GM12878 (cell line): ENCODE measurements at regions of chr22 and their contacts with region 1.

Region 1: GRCh38 chr22:46563381-46564083 is 26.1 kb upstream of the CELSR1 start:
- DNase-seq: no peak
- ATAC-seq: peak; percentile 97
- H3K4me3 ChIP-seq: no peak overlapping the region; the same call in 1 of the 2 replicates
- H3K27ac ChIP-seq: peak overlapping the region; percentile 50; the same call in 1 of the 2 replicates
- H3K4me1 ChIP-seq: peaks cover 12% of the 10 kb centered on the region
- H3K27me3 ChIP-seq: no peaks in the 10 kb centered on the region
- CTCF ChIP-seq: peak; percentile 80 to 93 (median 84)
- EP300 ChIP-seq: no peak
- POLR2A ChIP-seq: no peak
- RAD21 ChIP-seq: peak; percentile 81

Region 2: GRCh38 chr22:46491923-46492322 is 71.6 kb before region 1 on chr22:
- CTCF ChIA-PET with region 1: no interaction called
- POLR2A ChIA-PET with region 1: no interaction called
- RAD21 ChIA-PET with region 1: no interaction called
- SMC1A ChIA-PET with region 1: no interaction called
- in situ Hi-C with region 1: no loop called
- intact Hi-C with region 1: no loop called
- DNase-seq: no peak
- ATAC-seq: no peak
- H3K4me3 ChIP-seq: no peak overlapping the region
- H3K27ac ChIP-seq: no peak overlapping the region
- H3K4me1 ChIP-seq: peaks cover 3% of the 10 kb centered on the region; the same call in 1 of the 2 replicates
- H3K27me3 ChIP-seq: no peaks in the 10 kb centered on the region; a peak in 1 of 4 replicates
- CTCF ChIP-seq: no peak
- EP300 ChIP-seq: no peak
- POLR2A ChIP-seq: no peak
- RAD21 ChIP-seq: no peak

Region 3: GRCh38 chr22:46551321-46551720 is 12.2 kb before region 1 on chr22:
- CTCF ChIA-PET with region 1: interaction called, 13 read pairs
- POLR2A ChIA-PET with region 1: no interaction called
- RAD21 ChIA-PET with region 1: interaction called, 4 read pairs
- SMC1A ChIA-PET with region 1: no interaction called
- in situ Hi-C with region 1: no loop called
- intact Hi-C with region 1: no loop called
- DNase-seq: no peak
- ATAC-seq: no peak
- H3K4me3 ChIP-seq: no peak overlapping the region
- H3K27ac ChIP-seq: no peak overlapping the region
- H3K4me1 ChIP-seq: no peaks in the 10 kb centered on the region
- H3K27me3 ChIP-seq: no peaks in the 10 kb centered on the region; a peak in 2 of 4 replicates
- CTCF ChIP-seq: no peak
- EP300 ChIP-seq: no peak
- POLR2A ChIP-seq: no peak
- RAD21 ChIP-seq: no peak

Region 4: GRCh38 chr22:46592390-46592872 is 28.9 kb after region 1 on chr22:
- CTCF ChIA-PET with region 1: interaction called, 19 read pairs
- POLR2A ChIA-PET with region 1: no interaction called
- RAD21 ChIA-PET with region 1: interaction called, 13 read pairs
- SMC1A ChIA-PET with region 1: interaction called, 13 read pairs
- in situ Hi-C with region 1: no loop called
- intact Hi-C with region 1: no loop called
- DNase-seq: no peak
- ATAC-seq: peak; percentile 71
- H3K4me3 ChIP-seq: peak overlapping the region; percentile 29; the same call in 1 of the 2 replicates
- H3K27ac ChIP-seq: peak overlapping the region; percentile 94
- H3K4me1 ChIP-seq: peaks cover 46% of the 10 kb centered on the region
- H3K27me3 ChIP-seq: no peaks in the 10 kb centered on the region
- CTCF ChIP-seq: no peak
- EP300 ChIP-seq: peak; percentile 15 to 66; a peak in 1 of 4 replicates
- POLR2A ChIP-seq: no peak
- RAD21 ChIP-seq: no peak

Region 5: DNA sequence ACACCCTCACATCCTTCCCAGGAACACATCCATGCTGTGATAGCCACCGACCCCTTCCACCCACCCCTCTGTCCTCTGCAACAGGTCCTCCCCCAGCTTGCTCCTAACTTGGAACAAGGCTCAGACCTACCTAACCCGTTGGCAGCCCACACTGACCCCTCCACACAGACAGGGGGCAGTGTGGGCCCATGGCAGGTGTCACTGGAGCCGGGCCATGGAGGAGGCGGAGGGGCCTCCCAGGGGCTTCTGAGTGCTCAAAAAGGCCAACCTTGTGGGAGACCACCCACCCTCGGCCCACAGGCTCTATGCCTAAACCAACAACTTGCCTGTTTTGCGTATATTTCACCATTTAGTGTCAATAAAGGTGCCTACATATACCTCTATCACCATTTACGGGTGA is 117.5 kb after region 1 on chr22:
- CTCF ChIA-PET with region 1: interaction called, 37 read pairs
- POLR2A ChIA-PET with region 1: no interaction called
- RAD21 ChIA-PET with region 1: interaction called, 8 read pairs
- SMC1A ChIA-PET with region 1: interaction called, 13 read pairs
- in situ Hi-C with region 1: no loop called
- intact Hi-C with region 1: loop called (anchors 1 kb)
- DNase-seq: no peak
- ATAC-seq: peak; percentile 74
- H3K4me3 ChIP-seq: no peak overlapping the region
- H3K27ac ChIP-seq: no peak overlapping the region
- H3K4me1 ChIP-seq: peaks cover 24% of the 10 kb centered on the region
- H3K27me3 ChIP-seq: no peaks in the 10 kb centered on the region
- CTCF ChIP-seq: peak; percentile 45 to 71 (median 50)
- EP300 ChIP-seq: no peak
- POLR2A ChIP-seq: no peak
- RAD21 ChIP-seq: peak; percentile 54

Region 6: GRCh38 chr22:46737976-46738646 is 174.6 kb after region 1 on chr22 and contains the start of gene CERK:
- CTCF ChIA-PET with region 1: interaction called, 8 read pairs
- POLR2A ChIA-PET with region 1: interaction called, 3 read pairs
- RAD21 ChIA-PET with region 1: interaction called, 13 read pairs
- SMC1A ChIA-PET with region 1: interaction called, 6 read pairs
- in situ Hi-C with region 1: no loop called
- intact Hi-C with region 1: loop called (anchors 5 kb)
- DNase-seq: no peak
- ATAC-seq: peak; percentile 61
- H3K4me3 ChIP-seq: peak within 1 kb of the TSS; percentile 96
- H3K27ac ChIP-seq: peak within 1 kb of the TSS; percentile 63
- H3K4me1 ChIP-seq: peaks cover 30% of the 10 kb centered on the region
- H3K27me3 ChIP-seq: no peaks in the 10 kb centered on the region
- CTCF ChIP-seq: no peak
- EP300 ChIP-seq: no peak
- POLR2A ChIP-seq: peak; percentile 56; the same call in 1 of the 2 replicates
- RAD21 ChIP-seq: no peak
- polyA plus RNA-seq, gene CERK: 4.0 to 5.8 TPM

Region 7: GRCh38 chr22:46774253-46774979 is 210.9 kb after region 1 on chr22:
- CTCF ChIA-PET with region 1: interaction called, 12 read pairs
- POLR2A ChIA-PET with region 1: interaction called, 5 read pairs
- RAD21 ChIA-PET with region 1: interaction called, 4 read pairs
- SMC1A ChIA-PET with region 1: interaction called, 6 read pairs
- in situ Hi-C with region 1: no loop called
- intact Hi-C with region 1: no loop called
- DNase-seq: no peak
- ATAC-seq: peak; percentile 62
- H3K4me3 ChIP-seq: peak overlapping the region; percentile 73
- H3K27ac ChIP-seq: peak overlapping the region; percentile 94
- H3K4me1 ChIP-seq: peaks cover 63% of the 10 kb centered on the region
- H3K27me3 ChIP-seq: no peaks in the 10 kb centered on the region
- CTCF ChIP-seq: no peak; a peak in 1 of 6 replicates
- EP300 ChIP-seq: peak in 1 of 2 experiments; percentile 69; a peak in 1 of 4 replicates
- POLR2A ChIP-seq: no peak; the same call in none of the 2 replicates
- RAD21 ChIP-seq: no peak

Region 8: GRCh38 chr22:48492366-48493320 is 1929.1 kb after region 1 on chr22:
- CTCF ChIA-PET with region 1: no interaction called
- POLR2A ChIA-PET with region 1: no interaction called
- RAD21 ChIA-PET with region 1: no interaction called
- SMC1A ChIA-PET with region 1: no interaction called
- in situ Hi-C with region 1: loop called (anchors 25 kb)
- intact Hi-C with region 1: no loop called
- DNase-seq: peak; percentile 1
- ATAC-seq: peak; percentile 79
- H3K4me3 ChIP-seq: no peak overlapping the region
- H3K27ac ChIP-seq: no peak overlapping the region
- H3K4me1 ChIP-seq: no peaks in the 10 kb centered on the region
- H3K27me3 ChIP-seq: peaks cover 0 to 5% of the 10 kb centered on the region in 2 experiments; a peak in 3 of 4 replicates
- CTCF ChIP-seq: peak; percentile 76 to 80 (median 79)
- EP300 ChIP-seq: no peak
- POLR2A ChIP-seq: no peak
- RAD21 ChIP-seq: peak; percentile 81